Esophagus muscularis mucosa (tissue), 4 donors: ENCODE measurements at regions of chr6 and their contacts with region 1.

Region 1: GRCh38 chr6:83417880-83418663 is 12.8 kb downstream of the ME1 start:
- DNase-seq: no peak
- H3K4me3 ChIP-seq: no peak overlapping the region
- H3K27ac ChIP-seq: no peak overlapping the region
- H3K4me1 ChIP-seq: peaks cover 0 to 6% (median 0%) of the 10 kb centered on the region in 4 donors
- H3K27me3 ChIP-seq: no peaks in the 10 kb centered on the region
- CTCF ChIP-seq: peak; percentile 59 to 73 (median 62)
- EP300 ChIP-seq: no peak
- POLR2A ChIP-seq: no peak

Region 2: GRCh38 chr6:82331031-82331773 is 1086.9 kb before region 1 on chr6:
- intact Hi-C with region 1: no loop called
- DNase-seq: no peak
- H3K4me3 ChIP-seq: no peak overlapping the region
- H3K27ac ChIP-seq: peak overlapping the region in 3 of 4 donors; percentile 15 to 27 (median 22)
- H3K4me1 ChIP-seq: peaks cover 0 to 20% (median 8%) of the 10 kb centered on the region in 4 donors
- H3K27me3 ChIP-seq: no peaks in the 10 kb centered on the region
- CTCF ChIP-seq: peak; percentile 11 to 30 (median 14)
- EP300 ChIP-seq: no peak
- POLR2A ChIP-seq: no peak

Region 3: GRCh38 chr6:83221889-83222479 is 196.1 kb before region 1 on chr6:
- intact Hi-C with region 1: loop called (anchors 5 kb)
- DNase-seq: no peak
- H3K4me3 ChIP-seq: no peak overlapping the region
- H3K27ac ChIP-seq: no peak overlapping the region
- H3K4me1 ChIP-seq: peaks cover 0 to 5% (median 0%) of the 10 kb centered on the region in 4 donors
- H3K27me3 ChIP-seq: no peaks in the 10 kb centered on the region
- CTCF ChIP-seq: peak; percentile 44 to 55 (median 53)
- EP300 ChIP-seq: no peak
- POLR2A ChIP-seq: no peak

Region 4: GRCh38 chr6:83474309-83474708 is 56.2 kb after region 1 on chr6:
- intact Hi-C with region 1: no loop called
- DNase-seq: no peak
- H3K4me3 ChIP-seq: no peak overlapping the region
- H3K27ac ChIP-seq: no peak overlapping the region
- H3K4me1 ChIP-seq: no peaks in the 10 kb centered on the region
- H3K27me3 ChIP-seq: no peaks in the 10 kb centered on the region
- CTCF ChIP-seq: no peak
- EP300 ChIP-seq: no peak
- POLR2A ChIP-seq: no peak

Region 5: GRCh38 chr6:83514866-83515466 is 96.9 kb after region 1 on chr6:
- intact Hi-C with region 1: loop called (anchors 2 kb)
- DNase-seq: no peak
- H3K4me3 ChIP-seq: no peak overlapping the region
- H3K27ac ChIP-seq: no peak overlapping the region
- H3K4me1 ChIP-seq: peaks cover 0 to 20% (median 17%) of the 10 kb centered on the region in 4 donors
- H3K27me3 ChIP-seq: no peaks in the 10 kb centered on the region
- CTCF ChIP-seq: peak; percentile 77 to 82 (median 81)
- EP300 ChIP-seq: no peak
- POLR2A ChIP-seq: no peak